Sciatic nerve (tissue), 2 donors: ENCODE measurements at regions of chr19 and their contacts with region 1.

Region 1: DNA sequence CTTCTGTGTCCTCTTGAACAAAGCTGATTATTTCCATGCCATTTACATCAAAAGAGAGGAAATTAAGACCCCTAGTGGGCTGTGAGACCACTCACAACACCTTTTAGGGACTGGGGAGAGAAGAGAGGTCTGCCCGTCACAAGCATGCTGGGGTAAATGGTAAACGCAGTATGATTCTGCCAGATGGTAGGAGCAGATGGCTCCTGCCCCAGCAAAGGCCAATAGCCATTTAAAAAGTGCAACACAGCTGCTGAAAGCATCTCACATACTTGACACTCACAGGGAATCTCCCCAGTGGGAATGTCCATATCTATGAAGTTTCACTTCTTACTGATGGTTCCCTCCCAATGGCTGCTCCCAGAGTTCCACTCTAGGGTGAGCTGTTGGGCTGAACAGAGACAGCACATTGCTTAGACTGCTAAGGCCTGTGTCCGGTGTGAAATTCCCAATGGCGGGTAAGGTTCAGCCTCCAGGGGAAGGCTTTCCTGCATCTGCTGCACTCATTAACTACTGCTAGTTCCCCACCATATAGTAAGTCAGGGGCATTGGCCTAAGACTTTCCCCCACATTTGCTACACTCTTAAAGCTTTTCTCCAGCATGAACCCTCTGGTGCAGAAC is 7.4 kb downstream of the ZNF671 start:
- DNase-seq: no peak
- ATAC-seq: no peak

Region 2: DNA sequence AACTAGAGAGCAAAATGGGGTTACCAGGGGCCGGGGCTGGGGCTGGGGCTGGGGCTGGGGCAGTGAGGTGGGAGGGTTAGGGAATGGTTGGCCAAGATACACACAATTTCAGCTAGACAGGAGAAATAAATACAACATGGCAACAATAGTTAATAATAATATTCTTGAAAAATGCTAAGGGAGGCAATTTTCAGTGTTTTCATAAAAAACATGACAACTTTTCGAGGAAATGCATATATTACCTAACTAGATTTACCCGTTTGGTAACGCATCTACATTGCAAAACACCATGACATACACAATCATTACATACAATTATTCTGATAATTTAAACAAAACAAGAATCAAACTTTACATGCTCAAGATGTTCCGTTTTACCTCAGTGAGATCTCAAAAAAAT is 1938.9 kb before region 1 on chr19:
- intact Hi-C with region 1: loop called (anchors 5 kb)
- DNase-seq: no peak
- ATAC-seq: no peak

Region 3: GRCh38 chr19:56189785-56190184 is 1530.2 kb before region 1 on chr19:
- intact Hi-C with region 1: loop called (anchors 10 kb)
- DNase-seq: no peak
- ATAC-seq: no peak